H1 (cell line): ENCODE measurements at regions of chr5 and their contacts with region 1.

Region 1: GRCh38 chr5:57094753-57095683 is 78.8 kb upstream of the GPBP1 start:
- DNase-seq: peak; percentile 15 to 78
- H3K4me3 ChIP-seq: no peak overlapping the region
- H3K27ac ChIP-seq: no peak overlapping the region
- H3K4me1 ChIP-seq: peaks cover 0 to 3% (median under 1%) of the 10 kb centered on the region in 4 experiments; a peak in 1 of 7 replicates
- H3K27me3 ChIP-seq: no peaks in the 10 kb centered on the region
- CTCF ChIP-seq: peak; percentile 51 to 73 (median 66)
- EP300 ChIP-seq: no peak
- POLR2A ChIP-seq: no peak
- RAD21 ChIP-seq: peak; percentile 51 to 60

Region 2: GRCh38 chr5:57004800-57005199 is 90.2 kb before region 1 on chr5:
- CTCF ChIA-PET with region 1: interaction called, 10 read pairs
- POLR2A ChIA-PET with region 1: no interaction called
- DNase-seq: no peak
- H3K4me3 ChIP-seq: no peak overlapping the region
- H3K27ac ChIP-seq: no peak overlapping the region
- H3K4me1 ChIP-seq: peaks cover 0 to 2% (median 0%) of the 10 kb centered on the region in 4 experiments; a peak in 1 of 7 replicates
- H3K27me3 ChIP-seq: no peaks in the 10 kb centered on the region
- CTCF ChIP-seq: no peak
- EP300 ChIP-seq: no peak
- POLR2A ChIP-seq: no peak
- RAD21 ChIP-seq: no peak

Region 3: GRCh38 chr5:57072218-57072901 is 22.7 kb before region 1 on chr5:
- CTCF ChIA-PET with region 1: interaction called, 12 read pairs
- POLR2A ChIA-PET with region 1: no interaction called
- DNase-seq: peak in 1 of 2 experiments; percentile 17
- H3K4me3 ChIP-seq: no peak overlapping the region; a peak in 1 of 8 replicates
- H3K27ac ChIP-seq: no peak overlapping the region
- H3K4me1 ChIP-seq: peaks cover 2 to 8% (median 3%) of the 10 kb centered on the region in 4 experiments; a peak in 3 of 7 replicates
- H3K27me3 ChIP-seq: no peaks in the 10 kb centered on the region
- CTCF ChIP-seq: no peak
- EP300 ChIP-seq: no peak
- POLR2A ChIP-seq: no peak
- RAD21 ChIP-seq: no peak

Region 4: DNA sequence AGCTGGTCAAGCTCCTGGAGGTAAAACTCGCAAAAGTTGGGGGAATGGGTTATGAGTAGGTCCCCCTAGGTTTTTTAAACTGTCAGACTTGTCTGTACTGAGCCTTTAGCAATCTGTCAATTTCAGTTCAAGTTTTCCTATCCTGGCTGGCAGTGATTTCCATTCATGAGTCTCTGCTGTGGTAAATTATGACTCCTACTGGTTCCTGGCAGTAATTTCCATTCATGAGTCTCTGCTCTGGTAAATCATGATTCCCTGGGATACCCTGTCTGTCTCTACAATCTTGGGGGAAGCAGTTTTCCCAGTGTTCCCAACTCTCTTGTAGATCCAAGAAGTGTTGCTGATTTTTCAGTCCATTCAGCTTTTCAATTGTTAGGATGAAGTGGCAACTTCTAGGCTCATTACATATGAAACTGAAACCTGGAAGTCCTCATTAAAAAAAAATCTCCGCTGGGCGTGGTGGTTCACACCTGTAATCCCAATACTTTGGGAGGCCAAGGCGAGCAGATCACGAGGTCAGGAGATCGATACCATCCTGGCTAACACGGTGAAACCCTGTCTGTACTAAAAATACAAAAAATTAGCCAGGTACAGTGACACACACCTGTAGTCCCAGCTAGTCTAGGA is 12.5 kb before region 1 on chr5:
- CTCF ChIA-PET with region 1: interaction called, 31 read pairs
- POLR2A ChIA-PET with region 1: no interaction called
- DNase-seq: no peak
- H3K4me3 ChIP-seq: no peak overlapping the region
- H3K27ac ChIP-seq: no peak overlapping the region
- H3K4me1 ChIP-seq: no peaks in the 10 kb centered on the region
- H3K27me3 ChIP-seq: no peaks in the 10 kb centered on the region
- CTCF ChIP-seq: peak in 2 of 3 experiments; percentile 38 to 48; a peak in 2 of 4 replicates
- EP300 ChIP-seq: no peak
- POLR2A ChIP-seq: no peak
- RAD21 ChIP-seq: peak; percentile 64 to 72